ENCODE measurements at regions of chr5 and their contacts with region 1.

Region 1: DNA sequence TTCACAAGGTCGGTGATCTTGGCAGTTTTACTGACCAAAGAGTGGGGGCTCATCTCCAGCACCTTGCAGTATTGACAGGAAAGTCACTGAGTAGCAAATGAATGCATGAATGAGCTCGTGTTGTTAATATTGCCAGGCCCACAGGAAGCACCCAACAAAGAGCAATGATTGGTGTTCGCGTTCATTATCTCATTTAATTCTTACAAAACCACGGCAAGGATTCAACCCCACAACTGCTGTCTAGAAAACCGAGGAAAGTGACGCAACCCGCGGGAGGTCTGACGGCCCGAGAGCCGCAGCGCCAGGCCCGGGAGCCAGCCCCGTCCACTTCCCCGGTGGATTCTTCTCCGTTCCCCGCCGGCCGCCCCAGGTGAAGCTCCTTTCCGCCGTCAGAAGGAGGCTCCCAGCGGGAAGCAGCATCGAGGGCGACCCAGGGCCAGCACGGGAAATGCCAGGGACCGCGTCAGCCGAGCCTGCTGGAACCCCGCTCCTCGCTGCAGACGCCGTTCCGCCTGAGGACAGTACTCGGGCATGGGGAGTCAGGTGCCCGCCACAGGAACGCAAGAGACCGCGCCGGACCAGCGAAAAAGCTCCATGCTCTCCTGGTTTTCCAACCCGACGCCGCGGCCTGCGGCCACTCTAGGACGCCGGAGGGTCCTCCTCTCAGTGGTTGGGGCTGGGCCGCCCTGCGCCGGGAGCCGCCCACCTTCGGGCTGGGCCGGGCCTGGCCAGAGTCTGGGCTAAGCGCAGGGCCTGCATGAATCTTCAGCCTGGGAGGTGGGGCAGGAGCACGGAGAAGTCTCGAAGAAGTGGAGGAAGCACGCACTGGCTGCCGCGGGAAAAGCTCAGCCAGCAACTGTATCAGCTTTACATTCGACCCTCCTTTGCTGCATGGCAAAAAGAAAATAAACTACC is 19.8 kb upstream of the FER start:
- DNase-seq: peak; percentile 90 to 94
- ATAC-seq: peak; percentile 99 to 100 (median 100)
- H3K4me3 ChIP-seq: peak overlapping the region; percentile 82
- H3K27ac ChIP-seq: peak overlapping the region; percentile 87
- H3K4me1 ChIP-seq: peaks cover 16% of the 10 kb centered on the region
- H3K27me3 ChIP-seq: no peaks in the 10 kb centered on the region
- CTCF ChIP-seq: no peak

Region 2: GRCh38 chr5:108521011-108521700 is 206.8 kb before region 1 on chr5:
- intact Hi-C with region 1: no loop called
- DNase-seq: no peak
- ATAC-seq: no peak
- H3K4me3 ChIP-seq: no peak overlapping the region
- H3K27ac ChIP-seq: no peak overlapping the region
- H3K4me1 ChIP-seq: no peaks in the 10 kb centered on the region
- H3K27me3 ChIP-seq: no peaks in the 10 kb centered on the region
- CTCF ChIP-seq: no peak

Region 3: DNA sequence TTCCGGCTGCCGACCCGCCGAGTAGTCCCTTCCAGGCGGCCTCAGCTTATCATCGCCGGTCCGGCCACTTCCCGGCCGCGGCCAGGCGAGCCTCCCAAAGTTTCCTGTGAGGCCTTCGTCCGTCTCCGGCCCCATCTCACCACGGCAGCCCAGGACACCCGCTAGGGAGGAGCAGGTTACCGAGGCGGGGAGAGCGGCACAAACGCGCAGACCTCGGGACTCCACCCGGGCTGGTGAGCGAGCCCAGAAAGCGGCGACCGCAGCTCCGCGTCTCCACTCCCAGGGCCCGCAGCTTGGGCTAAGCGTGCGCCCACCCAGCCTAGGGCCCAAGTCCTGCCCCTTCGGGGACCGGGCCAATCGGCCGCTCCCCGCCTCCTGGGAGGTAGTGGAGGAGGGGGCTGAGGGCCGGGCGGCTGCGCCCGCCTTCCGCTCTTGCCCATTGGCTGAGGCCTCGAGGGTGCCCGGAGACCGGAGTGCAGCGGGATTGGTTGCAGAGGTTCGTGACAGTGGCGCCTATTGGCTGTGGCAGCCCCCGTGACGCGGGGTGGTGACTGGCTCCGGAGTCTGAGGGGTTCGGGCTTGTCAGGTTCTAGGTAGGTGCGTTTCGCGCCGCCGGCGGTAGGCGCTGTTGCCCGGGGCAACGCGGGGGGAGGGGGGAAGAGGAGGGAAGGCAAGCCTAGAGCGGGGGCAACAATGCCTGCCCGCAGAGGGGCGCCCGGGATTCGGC is 20.7 kb after region 1 on chr5:
- intact Hi-C with region 1: loop called (anchors 1 to 2 kb)
- DNase-seq: peak; percentile 99
- ATAC-seq: peak; percentile 97 to 99 (median 99)
- H3K4me3 ChIP-seq: peak overlapping the region; percentile 88
- H3K27ac ChIP-seq: peak overlapping the region; percentile 98
- H3K4me1 ChIP-seq: peaks cover 12% of the 10 kb centered on the region
- H3K27me3 ChIP-seq: no peaks in the 10 kb centered on the region
- CTCF ChIP-seq: no peak

Region 4: GRCh38 chr5:109409844-109410388 is 682.0 kb after region 1 on chr5 and contains the start of gene PJA2:
- intact Hi-C with region 1: loop called in 1 of 2 experiments (anchors 5 kb)
- DNase-seq: peak; percentile 98
- ATAC-seq: peak; percentile 92 to 97 (median 94)
- H3K4me3 ChIP-seq: peak within 1 kb of the TSS; percentile 90
- H3K27ac ChIP-seq: peak within 1 kb of the TSS; percentile 98
- H3K4me1 ChIP-seq: peaks cover 44% of the 10 kb centered on the region
- H3K27me3 ChIP-seq: no peaks in the 10 kb centered on the region
- CTCF ChIP-seq: peak; percentile 37
- total RNA-seq, gene PJA2: 39.3 to 66.9 (median 51.3) TPM

Measured in psoas muscle (tissue), 8 donors.